ENCODE measurements at regions of chr1 and their contacts with region 1.

Region 1: DNA sequence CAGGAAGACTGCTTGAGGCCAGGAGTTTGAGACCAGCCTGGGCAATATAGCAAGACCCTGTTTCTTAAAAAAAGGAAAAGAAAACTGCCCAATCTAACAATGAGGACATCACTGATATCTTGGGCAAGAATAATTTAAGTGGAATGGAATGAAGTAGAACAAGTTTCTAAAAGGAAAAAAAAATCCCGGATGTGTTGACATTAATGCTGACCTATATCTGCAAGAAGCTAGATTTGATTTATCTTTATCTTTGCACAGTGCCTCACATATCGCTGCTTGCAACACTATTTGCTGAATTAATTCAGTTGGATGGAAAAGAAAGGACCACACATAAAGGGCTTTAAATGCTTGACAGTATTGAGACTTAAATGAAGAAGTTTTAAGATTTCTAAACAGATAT is 27.8 kb downstream of the DIPK1A start:
- DNase-seq: peak; percentile 38 to 62
- H3K4me3 ChIP-seq: no peak overlapping the region
- H3K4me3 Mint-ChIP-seq: peak overlapping the region; percentile 3
- H3K27ac Mint-ChIP-seq: peak overlapping the region; percentile 9
- H3K4me1 ChIP-seq: peaks cover 18% of the 10 kb centered on the region
- H3K4me1 Mint-ChIP-seq: peaks cover 28% of the 10 kb centered on the region
- H3K27me3 ChIP-seq: no peaks in the 10 kb centered on the region
- H3K27me3 Mint-ChIP-seq: no peaks in the 10 kb centered on the region
- CTCF ChIP-seq: no peak

Region 2: GRCh38 chr1:92886886-92887419 is 46.5 kb before region 1 on chr1:
- CTCF ChIA-PET with region 1: no interaction called
- POLR2A ChIA-PET with region 1: no interaction called
- intact Hi-C with region 1: loop called (anchors 1 kb)
- DNase-seq: peak; percentile 67 to 82
- H3K4me3 ChIP-seq: no peak overlapping the region
- H3K4me3 Mint-ChIP-seq: peak overlapping the region; percentile 45
- H3K27ac Mint-ChIP-seq: peak overlapping the region; percentile 83
- H3K4me1 ChIP-seq: peaks cover 10% of the 10 kb centered on the region
- H3K4me1 Mint-ChIP-seq: peaks cover 14% of the 10 kb centered on the region
- H3K27me3 ChIP-seq: no peaks in the 10 kb centered on the region
- H3K27me3 Mint-ChIP-seq: no peaks in the 10 kb centered on the region
- CTCF ChIP-seq: no peak

Region 3: GRCh38 chr1:92909321-92909720 is 24.1 kb before region 1 on chr1:
- CTCF ChIA-PET with region 1: no interaction called
- POLR2A ChIA-PET with region 1: no interaction called
- intact Hi-C with region 1: no loop called
- DNase-seq: no peak
- H3K4me3 ChIP-seq: no peak overlapping the region
- H3K4me3 Mint-ChIP-seq: no peak overlapping the region
- H3K27ac Mint-ChIP-seq: no peak overlapping the region
- H3K4me1 ChIP-seq: peaks cover 11% of the 10 kb centered on the region; the same call in 1 of the 2 replicates
- H3K4me1 Mint-ChIP-seq: peaks cover 27% of the 10 kb centered on the region
- H3K27me3 ChIP-seq: no peaks in the 10 kb centered on the region
- H3K27me3 Mint-ChIP-seq: no peaks in the 10 kb centered on the region
- CTCF ChIP-seq: no peak

Region 4: GRCh38 chr1:92951141-92951582 is 17.7 kb after region 1 on chr1:
- CTCF ChIA-PET with region 1: no interaction called
- POLR2A ChIA-PET with region 1: no interaction called
- intact Hi-C with region 1: loop called (anchors 1 kb)
- DNase-seq: peak in 1 of 2 experiments; percentile 40
- H3K4me3 ChIP-seq: no peak overlapping the region
- H3K4me3 Mint-ChIP-seq: no peak overlapping the region
- H3K27ac Mint-ChIP-seq: no peak overlapping the region
- H3K4me1 ChIP-seq: peaks cover 25% of the 10 kb centered on the region
- H3K4me1 Mint-ChIP-seq: peaks cover 7% of the 10 kb centered on the region
- H3K27me3 ChIP-seq: no peaks in the 10 kb centered on the region
- H3K27me3 Mint-ChIP-seq: no peaks in the 10 kb centered on the region
- CTCF ChIP-seq: no peak

Region 5: GRCh38 chr1:92960395-92961130 is 27.1 kb after region 1 on chr1:
- CTCF ChIA-PET with region 1: interaction called, 3 read pairs
- POLR2A ChIA-PET with region 1: no interaction called
- intact Hi-C with region 1: loop called (anchors 1 kb)
- DNase-seq: peak; percentile 62 to 63
- H3K4me3 ChIP-seq: peak overlapping the region; percentile 78
- H3K4me3 Mint-ChIP-seq: peak overlapping the region; percentile 81
- H3K27ac Mint-ChIP-seq: peak overlapping the region; percentile 78
- H3K4me1 ChIP-seq: peaks cover 28% of the 10 kb centered on the region
- H3K4me1 Mint-ChIP-seq: peaks cover 18% of the 10 kb centered on the region
- H3K27me3 ChIP-seq: no peaks in the 10 kb centered on the region
- H3K27me3 Mint-ChIP-seq: no peaks in the 10 kb centered on the region
- CTCF ChIP-seq: peak; percentile 58 to 64

Region 6: DNA sequence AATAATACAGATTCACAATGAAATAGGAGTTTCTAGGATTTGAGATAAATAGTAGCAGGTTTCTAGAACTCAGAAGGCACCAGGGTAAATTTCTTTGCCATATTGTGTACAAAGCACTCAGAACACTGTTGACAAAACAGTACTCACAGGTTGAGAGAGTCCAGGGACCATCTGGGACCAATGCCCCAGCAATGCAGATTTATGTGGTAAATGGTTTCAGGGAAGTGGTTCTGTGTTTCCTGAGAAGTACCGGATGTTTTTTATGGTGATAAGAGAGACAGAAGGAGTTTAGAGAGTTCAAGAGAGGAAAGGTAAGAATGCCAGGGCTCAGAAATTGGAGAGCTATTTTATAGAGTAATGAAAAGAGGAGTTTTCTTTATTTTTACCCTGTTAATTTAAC is 57.4 kb after region 1 on chr1:
- CTCF ChIA-PET with region 1: no interaction called
- POLR2A ChIA-PET with region 1: no interaction called
- intact Hi-C with region 1: no loop called
- DNase-seq: no peak
- H3K4me3 ChIP-seq: no peak overlapping the region
- H3K4me3 Mint-ChIP-seq: no peak overlapping the region
- H3K27ac Mint-ChIP-seq: no peak overlapping the region
- H3K4me1 ChIP-seq: 0 out of 2 replicates have a peak, but pooled peaks cover 3% of the 10 kb centered on the region
- H3K4me1 Mint-ChIP-seq: no peaks in the 10 kb centered on the region
- H3K27me3 ChIP-seq: no peaks in the 10 kb centered on the region
- H3K27me3 Mint-ChIP-seq: no peaks in the 10 kb centered on the region
- CTCF ChIP-seq: no peak